ENCODE measurements at regions of chr15 and their contacts with region 1.

Region 1: DNA sequence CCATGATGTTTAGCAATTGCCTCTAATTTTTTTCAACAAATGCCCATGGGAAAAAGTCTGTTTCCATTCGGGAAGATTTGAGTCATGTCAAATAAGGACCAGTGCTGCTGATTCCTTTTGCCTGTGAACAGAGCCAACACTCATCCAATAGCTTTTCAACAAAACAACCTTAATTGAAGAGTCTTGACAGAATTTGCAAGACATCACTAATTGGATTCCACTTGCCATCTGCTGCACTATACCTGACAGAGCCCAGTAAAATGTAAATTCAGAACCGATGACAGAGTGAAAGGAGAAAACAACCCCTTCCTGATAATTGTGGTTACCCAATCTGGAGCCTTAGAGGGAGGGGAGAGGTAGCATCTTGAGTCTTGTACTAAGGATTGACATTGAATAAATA is 426.7 kb downstream of the AGBL1 start:
- DNase-seq: no peak
- H3K4me3 ChIP-seq: no peak overlapping the region
- H3K27ac ChIP-seq: no peak overlapping the region
- H3K4me1 ChIP-seq: no peaks in the 10 kb centered on the region
- H3K27me3 ChIP-seq: no peaks in the 10 kb centered on the region
- CTCF ChIP-seq: no peak

Region 2: GRCh38 chr15:86572368-86572841 is 66.0 kb after region 1 on chr15:
- intact Hi-C with region 1: loop called (anchors 2 kb)
- DNase-seq: no peak
- H3K4me3 ChIP-seq: no peak overlapping the region
- H3K27ac ChIP-seq: no peak overlapping the region
- H3K4me1 ChIP-seq: no peaks in the 10 kb centered on the region
- H3K27me3 ChIP-seq: peaks cover 0 to 5% of the 10 kb centered on the region in 2 donors
- CTCF ChIP-seq: no peak

Measured in tibial artery (tissue), 4 donors.